GM18951 (cell line): ENCODE measurements at regions of chr14 and their contacts with region 1.

Region 1: DNA sequence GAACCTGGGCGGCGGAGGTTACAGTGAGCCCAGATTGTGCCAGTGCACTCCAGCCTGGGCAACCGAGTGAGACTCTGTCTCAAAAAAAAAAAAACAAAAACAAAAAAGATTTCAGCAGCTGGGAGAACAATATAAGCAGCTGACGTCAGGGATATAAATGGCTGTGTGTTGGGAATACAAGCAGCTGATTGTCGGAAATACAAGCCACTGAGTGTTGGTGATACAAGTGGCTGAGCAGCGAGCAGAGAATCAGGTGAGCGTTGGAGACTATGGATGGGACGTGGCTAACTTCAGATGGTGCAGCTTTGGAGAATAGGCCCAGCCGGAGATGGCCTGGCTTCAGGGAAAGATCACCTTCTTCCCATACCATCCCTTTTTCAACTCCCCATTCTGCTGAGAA is 32.0 kb downstream of the PSEN1 start:
- POLR2A ChIP-seq: no peak

Region 2: DNA sequence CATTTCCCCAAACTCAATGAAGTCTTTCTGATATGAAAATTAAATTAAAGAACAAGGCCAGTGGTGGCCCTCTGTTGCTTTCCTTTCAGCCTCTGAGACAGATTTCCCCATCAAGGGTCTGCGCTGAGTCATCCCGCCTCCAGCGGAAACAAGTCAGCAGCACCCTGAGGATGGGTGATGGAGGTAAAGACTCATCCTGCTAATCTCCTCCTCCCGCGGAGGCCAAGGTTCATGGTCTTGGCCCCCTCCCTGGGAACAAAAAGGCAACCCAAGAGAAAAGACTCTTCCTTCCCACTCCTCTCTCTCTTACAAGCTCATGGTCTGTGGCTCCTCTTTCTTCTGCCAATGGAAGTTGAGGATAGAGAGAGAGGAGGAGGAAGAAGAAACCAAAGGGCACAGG is 299.1 kb after region 1 on chr14:
- in situ Hi-C with region 1: loop called (anchors 5 kb)
- POLR2A ChIP-seq: no peak